Uterus (tissue), 4 donors: ENCODE measurements at regions of chr1 and their contacts with region 1.

Region 1: DNA sequence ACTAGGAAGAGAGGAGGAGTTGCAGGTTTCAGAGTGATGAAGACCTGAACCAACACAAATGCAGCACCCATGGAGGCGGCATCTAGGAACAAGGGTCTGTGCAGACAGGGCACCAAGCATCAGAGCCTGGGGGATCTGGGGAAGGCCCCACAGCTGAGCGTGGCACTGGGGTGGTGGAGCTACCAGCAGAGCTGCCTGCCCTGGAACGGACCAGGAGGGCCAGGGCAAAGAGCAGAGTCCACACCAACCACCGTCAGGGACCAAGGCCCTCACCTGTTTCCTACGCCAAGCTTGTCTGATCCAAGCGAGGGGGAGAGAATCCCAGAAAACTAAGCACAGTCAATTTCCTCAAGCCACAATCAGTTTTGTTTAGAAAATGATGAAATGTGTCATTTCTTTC is 79.0 kb upstream of the SYT6 start:
- DNase-seq: no peak
- H3K4me3 ChIP-seq: no peak overlapping the region
- H3K27ac ChIP-seq: no peak overlapping the region
- H3K4me1 ChIP-seq: no peaks in the 10 kb centered on the region
- H3K27me3 ChIP-seq: no peaks in the 10 kb centered on the region
- CTCF ChIP-seq: no peak
- POLR2A ChIP-seq: no peak

Region 2: GRCh38 chr1:114192329-114192728 is 40.4 kb before region 1 on chr1:
- intact Hi-C with region 1: loop called (anchors 2 kb)
- DNase-seq: no peak
- H3K4me3 ChIP-seq: no peak overlapping the region
- H3K27ac ChIP-seq: no peak overlapping the region
- H3K4me1 ChIP-seq: no peaks in the 10 kb centered on the region
- H3K27me3 ChIP-seq: no peaks in the 10 kb centered on the region
- CTCF ChIP-seq: no peak
- POLR2A ChIP-seq: no peak